CD8-positive, alpha-beta memory T cell (primary cell): ENCODE measurements at regions of chr17 and their contacts with region 1.

Region 1: GRCh38 chr17:49997791-49998703 is 3.0 kb upstream of the DLX3 start:
- DNase-seq: peak; percentile 72 to 89 (median 80)
- H3K4me3 ChIP-seq: no peak overlapping the region
- H3K4me3 Mint-ChIP-seq: no peak overlapping the region
- H3K27ac ChIP-seq: no peak overlapping the region
- H3K27ac Mint-ChIP-seq: no peak overlapping the region
- H3K4me1 ChIP-seq: peaks cover 22% of the 10 kb centered on the region
- H3K4me1 Mint-ChIP-seq: peaks cover 25 to 39% (median 29%) of the 10 kb centered on the region in 3 donors
- H3K27me3 ChIP-seq: peaks cover 58% of the 10 kb centered on the region
- H3K27me3 Mint-ChIP-seq: peaks cover 53 to 80% of the 10 kb centered on the region in 2 donors

Region 2: GRCh38 chr17:49556223-49556971 is 441.6 kb before region 1 on chr17:
- CTCF ChIA-PET with region 1: interaction called, 22 read pairs
- POLR2A ChIA-PET with region 1: no interaction called
- DNase-seq: peak; percentile 72 to 84 (median 75)
- H3K4me3 ChIP-seq: no peak overlapping the region
- H3K4me3 Mint-ChIP-seq: no peak overlapping the region
- H3K27ac ChIP-seq: no peak overlapping the region
- H3K27ac Mint-ChIP-seq: no peak overlapping the region
- H3K4me1 ChIP-seq: peaks cover 14% of the 10 kb centered on the region
- H3K4me1 Mint-ChIP-seq: peaks cover 5 to 10% (median 10%) of the 10 kb centered on the region in 3 donors
- H3K27me3 ChIP-seq: no peaks in the 10 kb centered on the region
- H3K27me3 Mint-ChIP-seq: peaks cover 1 to 9% of the 10 kb centered on the region in 2 donors

Region 3: DNA sequence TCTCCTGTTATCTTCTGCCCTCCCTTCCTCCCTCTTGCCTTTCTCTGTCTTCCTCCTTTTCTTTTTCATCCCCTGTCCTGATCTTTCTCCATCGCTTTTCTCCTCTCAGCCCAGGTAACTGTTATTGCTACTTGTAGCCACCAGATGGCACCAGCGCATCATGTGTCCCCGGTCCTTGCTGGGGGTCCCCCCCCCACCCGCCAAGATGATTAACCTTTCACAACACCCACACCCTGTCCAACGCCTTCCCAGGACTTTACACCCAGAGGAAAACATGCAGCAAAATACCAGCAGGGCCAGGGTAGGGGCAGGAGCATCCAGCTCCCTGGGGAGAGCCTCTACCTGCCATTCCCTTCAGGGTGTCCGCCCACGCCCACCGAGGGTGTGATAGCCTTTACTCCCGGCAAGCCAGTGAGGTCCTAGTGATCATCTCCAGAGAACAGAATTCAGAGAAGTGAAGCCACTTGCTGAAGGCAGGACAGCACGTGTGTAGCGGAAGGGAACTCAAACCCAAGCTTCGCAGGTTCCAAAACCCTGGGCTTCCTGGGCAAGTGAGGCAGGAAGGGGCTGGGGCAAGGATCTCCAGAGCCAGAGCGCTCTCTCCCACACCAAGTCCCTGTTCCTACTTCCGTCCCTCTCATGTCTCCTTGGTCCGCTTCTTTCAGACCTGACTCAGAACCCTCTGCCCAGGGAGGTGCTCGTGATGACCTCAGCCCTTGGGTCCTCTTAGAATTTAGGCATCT is 136.7 kb before region 1 on chr17:
- CTCF ChIA-PET with region 1: interaction called, 96 read pairs
- POLR2A ChIA-PET with region 1: interaction called, 3 read pairs
- DNase-seq: peak; percentile 32 to 57 (median 44)
- H3K4me3 ChIP-seq: no peak overlapping the region
- H3K4me3 Mint-ChIP-seq: no peak overlapping the region
- H3K27ac ChIP-seq: no peak overlapping the region
- H3K27ac Mint-ChIP-seq: peak overlapping the region in 1 of 8 donors; percentile 2
- H3K4me1 ChIP-seq: peaks cover 5% of the 10 kb centered on the region
- H3K4me1 Mint-ChIP-seq: peaks cover 3 to 5% (median 4%) of the 10 kb centered on the region in 3 donors
- H3K27me3 ChIP-seq: no peaks in the 10 kb centered on the region
- H3K27me3 Mint-ChIP-seq: peaks cover 9 to 13% of the 10 kb centered on the region in 2 donors

Region 4: GRCh38 chr17:49890181-49890821 is 107.7 kb before region 1 on chr17:
- CTCF ChIA-PET with region 1: interaction called, 12 read pairs
- POLR2A ChIA-PET with region 1: no interaction called
- DNase-seq: no peak
- H3K4me3 ChIP-seq: no peak overlapping the region
- H3K4me3 Mint-ChIP-seq: no peak overlapping the region
- H3K27ac ChIP-seq: no peak overlapping the region
- H3K27ac Mint-ChIP-seq: no peak overlapping the region
- H3K4me1 ChIP-seq: no peaks in the 10 kb centered on the region
- H3K4me1 Mint-ChIP-seq: no peaks in the 10 kb centered on the region
- H3K27me3 ChIP-seq: peaks cover 16% of the 10 kb centered on the region
- H3K27me3 Mint-ChIP-seq: peaks cover 44 to 71% of the 10 kb centered on the region in 2 donors

Region 5: GRCh38 chr17:49939318-49939717 is 58.7 kb before region 1 on chr17:
- CTCF ChIA-PET with region 1: interaction called, 27 read pairs
- POLR2A ChIA-PET with region 1: no interaction called
- DNase-seq: no peak
- H3K4me3 ChIP-seq: no peak overlapping the region
- H3K4me3 Mint-ChIP-seq: no peak overlapping the region
- H3K27ac ChIP-seq: no peak overlapping the region
- H3K27ac Mint-ChIP-seq: no peak overlapping the region
- H3K4me1 ChIP-seq: no peaks in the 10 kb centered on the region
- H3K4me1 Mint-ChIP-seq: no peaks in the 10 kb centered on the region
- H3K27me3 ChIP-seq: no peaks in the 10 kb centered on the region
- H3K27me3 Mint-ChIP-seq: peaks cover 25 to 54% of the 10 kb centered on the region in 2 donors

Region 6: GRCh38 chr17:49963626-49964302 is 34.3 kb before region 1 on chr17:
- CTCF ChIA-PET with region 1: interaction called, 10 read pairs
- POLR2A ChIA-PET with region 1: no interaction called
- DNase-seq: no peak
- H3K4me3 ChIP-seq: no peak overlapping the region
- H3K4me3 Mint-ChIP-seq: peak overlapping the region; percentile 2 to 79 (median 53)
- H3K27ac ChIP-seq: no peak overlapping the region
- H3K27ac Mint-ChIP-seq: peak overlapping the region in 4 of 8 donors; percentile 13 to 89 (median 40)
- H3K4me1 ChIP-seq: peaks cover 32% of the 10 kb centered on the region
- H3K4me1 Mint-ChIP-seq: peaks cover 28 to 39% (median 37%) of the 10 kb centered on the region in 3 donors
- H3K27me3 ChIP-seq: peaks cover 52% of the 10 kb centered on the region
- H3K27me3 Mint-ChIP-seq: peaks cover 61 to 76% of the 10 kb centered on the region in 2 donors

Region 7: GRCh38 chr17:49980703-49981197 is 17.3 kb before region 1 on chr17:
- CTCF ChIA-PET with region 1: interaction called, 64 read pairs
- POLR2A ChIA-PET with region 1: no interaction called
- DNase-seq: no peak
- H3K4me3 ChIP-seq: no peak overlapping the region
- H3K4me3 Mint-ChIP-seq: no peak overlapping the region
- H3K27ac ChIP-seq: no peak overlapping the region
- H3K27ac Mint-ChIP-seq: no peak overlapping the region
- H3K4me1 ChIP-seq: no peaks in the 10 kb centered on the region
- H3K4me1 Mint-ChIP-seq: no peaks in the 10 kb centered on the region
- H3K27me3 ChIP-seq: no peaks in the 10 kb centered on the region
- H3K27me3 Mint-ChIP-seq: peaks cover 48 to 68% of the 10 kb centered on the region in 2 donors

Region 8: DNA sequence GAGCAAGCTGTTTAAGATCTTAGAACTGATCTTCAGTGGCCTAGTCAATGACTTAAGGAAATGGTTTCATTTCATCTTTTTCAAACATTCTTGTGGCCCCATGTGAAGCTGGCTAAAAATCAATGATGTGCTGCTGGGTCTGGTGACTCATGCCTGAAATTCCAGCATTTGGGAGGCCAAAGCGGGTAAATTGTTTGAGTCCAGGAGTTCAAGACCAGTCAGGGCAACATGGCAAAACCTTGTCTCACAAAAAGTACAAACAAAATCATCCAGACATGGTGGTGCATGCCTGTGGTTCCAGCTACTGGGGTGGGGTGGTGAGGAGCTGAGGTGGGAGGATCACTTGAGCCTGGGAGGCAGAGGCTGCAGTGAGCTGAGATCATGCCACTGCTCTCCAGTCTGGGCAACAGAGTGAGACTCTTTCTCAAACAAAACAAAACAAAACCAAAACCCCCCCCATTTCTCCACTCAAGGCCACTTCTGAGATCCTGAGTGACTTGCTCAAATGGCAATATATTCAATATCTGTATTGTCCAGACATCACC is 220.8 kb after region 1 on chr17:
- CTCF ChIA-PET with region 1: no interaction called
- POLR2A ChIA-PET with region 1: no interaction called
- DNase-seq: no peak
- H3K4me3 ChIP-seq: no peak overlapping the region
- H3K4me3 Mint-ChIP-seq: no peak overlapping the region
- H3K27ac ChIP-seq: no peak overlapping the region
- H3K27ac Mint-ChIP-seq: no peak overlapping the region
- H3K4me1 ChIP-seq: no peaks in the 10 kb centered on the region
- H3K4me1 Mint-ChIP-seq: no peaks in the 10 kb centered on the region
- H3K27me3 ChIP-seq: no peaks in the 10 kb centered on the region
- H3K27me3 Mint-ChIP-seq: peaks cover 6 to 30% of the 10 kb centered on the region in 2 donors